Dendritic cell treated with granulocyte-macrophage colony-stimulating factor and Interleukin-4, amounts not matched to agents 40 ng/mL and 50 ng/mL, for 4 days (primary cell): ENCODE measurements at regions of chr4 and their contacts with region 1.

Region 1: GRCh38 chr4:54064295-54065111 is at the start of gene CHIC2:
- H3K4me3 Mint-ChIP-seq: peak within 1 kb of the TSS; percentile 89
- H3K27ac Mint-ChIP-seq: peak within 1 kb of the TSS; percentile 97
- H3K4me1 Mint-ChIP-seq: peaks cover 25% of the 10 kb centered on the region
- H3K27me3 Mint-ChIP-seq: peaks cover 3% of the 10 kb centered on the region

Region 2: GRCh38 chr4:53899586-53900270 is 164.8 kb before region 1 on chr4:
- intact Hi-C with region 1: no loop called
- H3K4me3 Mint-ChIP-seq: no peak overlapping the region
- H3K27ac Mint-ChIP-seq: no peak overlapping the region
- H3K4me1 Mint-ChIP-seq: no peaks in the 10 kb centered on the region
- H3K27me3 Mint-ChIP-seq: peaks cover 13% of the 10 kb centered on the region

Region 3: DNA sequence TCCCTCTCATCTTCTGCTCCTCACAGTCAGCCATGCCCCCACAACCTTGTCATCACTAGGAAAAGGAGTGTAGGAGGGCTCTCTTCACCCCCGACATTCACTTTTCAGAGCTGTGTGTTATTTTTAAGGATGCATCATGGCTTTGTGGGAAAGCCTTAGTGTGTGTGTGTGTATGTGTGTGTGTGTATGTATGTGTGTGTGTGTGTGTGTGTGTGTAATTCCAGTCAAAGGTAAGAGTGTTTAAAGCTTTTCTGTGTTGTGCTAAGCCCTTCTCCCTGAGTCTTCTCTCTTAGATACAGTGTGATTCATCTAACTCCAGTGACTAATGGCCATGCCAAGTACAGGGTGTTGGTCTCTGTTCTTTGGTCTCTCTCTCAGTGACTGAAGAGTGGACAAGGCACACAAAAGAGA is 76.7 kb before region 1 on chr4:
- intact Hi-C with region 1: no loop called
- H3K4me3 Mint-ChIP-seq: no peak overlapping the region
- H3K27ac Mint-ChIP-seq: no peak overlapping the region
- H3K4me1 Mint-ChIP-seq: peaks cover under 1% of the 10 kb centered on the region
- H3K27me3 Mint-ChIP-seq: no peaks in the 10 kb centered on the region

Region 4: GRCh38 chr4:54001668-54002572 is 62.6 kb before region 1 on chr4:
- intact Hi-C with region 1: loop called (anchors 5 kb)
- H3K4me3 Mint-ChIP-seq: no peak overlapping the region
- H3K27ac Mint-ChIP-seq: peak overlapping the region; percentile 57
- H3K4me1 Mint-ChIP-seq: peaks cover 13% of the 10 kb centered on the region
- H3K27me3 Mint-ChIP-seq: no peaks in the 10 kb centered on the region

Region 5: GRCh38 chr4:54091637-54092404 is 27.3 kb after region 1 on chr4:
- intact Hi-C with region 1: loop called (anchors 2 kb)
- H3K4me3 Mint-ChIP-seq: peak overlapping the region; percentile 82
- H3K27ac Mint-ChIP-seq: no peak overlapping the region
- H3K4me1 Mint-ChIP-seq: peaks cover 28% of the 10 kb centered on the region
- H3K27me3 Mint-ChIP-seq: peaks cover 85% of the 10 kb centered on the region

Region 6: DNA sequence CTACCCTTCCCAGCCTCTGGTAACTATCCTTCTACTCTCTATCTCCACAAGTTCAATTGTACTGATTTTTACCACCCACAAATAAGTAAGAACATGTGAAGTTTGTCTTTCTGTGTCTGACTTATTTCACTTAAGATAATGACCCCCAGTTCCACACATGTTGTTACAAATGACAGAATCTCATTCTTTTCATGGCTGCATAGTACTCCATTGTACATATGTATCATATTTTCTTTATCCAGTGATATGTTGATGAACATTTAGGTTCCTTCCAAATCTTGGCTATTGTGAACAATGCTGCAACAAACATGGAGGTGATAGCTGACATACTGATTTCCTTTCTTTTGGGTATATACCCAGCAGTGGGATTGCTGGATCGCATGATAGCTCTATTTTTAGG is 63.2 kb after region 1 on chr4:
- intact Hi-C with region 1: no loop called
- H3K4me3 Mint-ChIP-seq: no peak overlapping the region
- H3K27ac Mint-ChIP-seq: no peak overlapping the region
- H3K4me1 Mint-ChIP-seq: no peaks in the 10 kb centered on the region
- H3K27me3 Mint-ChIP-seq: no peaks in the 10 kb centered on the region